ENCODE measurements at regions of chr5 and their contacts with region 1.

Region 1: DNA sequence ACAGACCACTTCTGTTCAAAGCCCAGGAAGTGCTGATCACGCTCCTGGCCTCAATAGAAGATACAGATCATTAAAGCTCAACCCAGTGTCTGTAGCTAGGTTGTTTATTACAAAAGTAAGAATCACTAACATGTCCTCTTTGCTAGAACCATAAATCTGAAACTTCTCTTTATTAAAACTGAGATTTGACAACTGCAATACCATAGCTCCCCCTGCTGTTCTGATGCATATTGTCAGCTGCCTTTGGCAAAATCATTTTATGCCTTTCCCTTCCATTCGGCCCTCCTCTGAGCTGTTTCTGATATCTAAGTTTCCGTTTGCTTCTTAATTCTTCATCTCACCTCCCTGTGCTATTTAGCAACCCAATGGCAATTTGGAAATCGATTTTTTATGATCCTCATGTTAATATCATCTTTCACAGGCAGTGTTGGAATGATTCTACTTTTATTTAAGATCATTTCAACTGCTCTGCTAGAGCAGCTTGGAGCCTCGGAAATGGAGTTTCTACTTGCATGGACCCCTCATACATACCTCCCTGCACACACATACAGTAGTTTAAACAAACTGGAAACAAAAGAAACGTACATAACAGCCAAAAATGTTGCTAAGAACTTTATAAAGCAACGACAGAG is 998.8 kb downstream of the MAT2B start:
- DNase-seq: peak in 1 of 2 experiments; percentile 61
- H3K4me3 ChIP-seq: no peak overlapping the region
- H3K27ac ChIP-seq: no peak overlapping the region
- H3K4me1 ChIP-seq: peaks cover 0 to 2% (median 2%) of the 10 kb centered on the region in 4 experiments; a peak in 4 of 7 replicates
- H3K27me3 ChIP-seq: no peaks in the 10 kb centered on the region
- CTCF ChIP-seq: peak in 2 of 3 experiments; percentile 54 to 77; a peak in 2 of 4 replicates
- EP300 ChIP-seq: no peak
- POLR2A ChIP-seq: no peak
- RAD21 ChIP-seq: peak; percentile 88 to 92

Region 2: DNA sequence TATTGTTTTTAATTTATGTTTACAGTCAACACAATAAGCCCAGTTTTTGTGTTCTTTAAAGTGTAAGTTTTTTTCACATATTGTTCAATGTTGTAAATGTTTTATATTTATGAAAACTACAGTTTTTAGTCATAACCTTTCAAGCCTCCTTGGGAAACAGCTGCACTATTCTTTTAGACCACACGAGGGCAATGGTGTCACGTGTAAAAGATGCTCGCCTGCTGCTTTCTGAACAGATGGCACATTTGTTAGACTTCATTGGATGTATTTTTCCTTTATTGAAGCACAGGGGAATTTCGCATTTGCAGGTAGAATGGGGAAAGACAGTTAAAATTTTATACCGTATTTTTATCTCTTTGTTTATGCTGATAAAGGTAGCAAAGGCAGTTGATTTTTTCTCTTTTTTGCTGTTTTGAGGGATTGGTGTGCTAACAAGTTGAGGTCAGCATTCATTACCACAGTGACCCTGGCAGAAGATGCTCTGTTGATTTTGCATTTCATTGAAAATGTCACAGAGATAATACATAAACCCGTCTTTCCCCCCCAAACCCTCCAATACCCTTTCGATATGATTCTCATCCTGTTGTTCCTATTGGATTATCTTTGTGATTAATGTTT is 939.8 kb before region 1 on chr5:
- CTCF ChIA-PET with region 1: interaction called, 12 read pairs
- POLR2A ChIA-PET with region 1: no interaction called
- DNase-seq: peak in 1 of 2 experiments; percentile 83
- H3K4me3 ChIP-seq: peak overlapping the region in 1 of 4 experiments; percentile 36; a peak in 1 of 8 replicates
- H3K27ac ChIP-seq: no peak overlapping the region
- H3K4me1 ChIP-seq: peaks cover 8 to 25% (median 18%) of the 10 kb centered on the region in 4 experiments; a peak in 6 of 7 replicates
- H3K27me3 ChIP-seq: peaks cover 0 to 20% (median 14%) of the 10 kb centered on the region in 4 experiments; a peak in 4 of 7 replicates
- CTCF ChIP-seq: peak; percentile 10 to 83 (median 62)
- EP300 ChIP-seq: no peak
- POLR2A ChIP-seq: no peak
- RAD21 ChIP-seq: peak; percentile 91

Region 3: GRCh38 chr5:164013077-164013670 is 491.1 kb before region 1 on chr5:
- CTCF ChIA-PET with region 1: interaction called, 30 read pairs
- POLR2A ChIA-PET with region 1: no interaction called
- DNase-seq: peak; percentile 41 to 77
- H3K4me3 ChIP-seq: no peak overlapping the region
- H3K27ac ChIP-seq: no peak overlapping the region
- H3K4me1 ChIP-seq: no peaks in the 10 kb centered on the region
- H3K27me3 ChIP-seq: no peaks in the 10 kb centered on the region
- CTCF ChIP-seq: peak in 2 of 3 experiments; percentile 55 to 64; a peak in 2 of 4 replicates
- EP300 ChIP-seq: no peak
- POLR2A ChIP-seq: no peak
- RAD21 ChIP-seq: peak; percentile 92 to 93

Region 4: GRCh38 chr5:164048359-164048926 is 455.8 kb before region 1 on chr5:
- CTCF ChIA-PET with region 1: interaction called, 12 read pairs
- POLR2A ChIA-PET with region 1: no interaction called
- DNase-seq: no peak
- H3K4me3 ChIP-seq: no peak overlapping the region
- H3K27ac ChIP-seq: no peak overlapping the region
- H3K4me1 ChIP-seq: peaks cover 0 to 3% (median 1%) of the 10 kb centered on the region in 4 experiments; a peak in 1 of 7 replicates
- H3K27me3 ChIP-seq: no peaks in the 10 kb centered on the region
- CTCF ChIP-seq: peak in 1 of 3 experiments; percentile 12; a peak in 1 of 4 replicates
- EP300 ChIP-seq: no peak
- POLR2A ChIP-seq: no peak
- RAD21 ChIP-seq: peak in 1 of 2 experiments; percentile 50; a peak in 3 of 4 replicates

Region 5: GRCh38 chr5:164475339-164475977 is 28.8 kb before region 1 on chr5:
- CTCF ChIA-PET with region 1: interaction called, 15 read pairs
- POLR2A ChIA-PET with region 1: no interaction called
- DNase-seq: no peak
- H3K4me3 ChIP-seq: no peak overlapping the region
- H3K27ac ChIP-seq: no peak overlapping the region
- H3K4me1 ChIP-seq: no peaks in the 10 kb centered on the region; a peak in 1 of 7 replicates
- H3K27me3 ChIP-seq: no peaks in the 10 kb centered on the region
- CTCF ChIP-seq: peak in 2 of 3 experiments; percentile 57 to 59; a peak in 3 of 4 replicates
- EP300 ChIP-seq: no peak
- POLR2A ChIP-seq: no peak
- RAD21 ChIP-seq: peak; percentile 88 to 91

Region 6: DNA sequence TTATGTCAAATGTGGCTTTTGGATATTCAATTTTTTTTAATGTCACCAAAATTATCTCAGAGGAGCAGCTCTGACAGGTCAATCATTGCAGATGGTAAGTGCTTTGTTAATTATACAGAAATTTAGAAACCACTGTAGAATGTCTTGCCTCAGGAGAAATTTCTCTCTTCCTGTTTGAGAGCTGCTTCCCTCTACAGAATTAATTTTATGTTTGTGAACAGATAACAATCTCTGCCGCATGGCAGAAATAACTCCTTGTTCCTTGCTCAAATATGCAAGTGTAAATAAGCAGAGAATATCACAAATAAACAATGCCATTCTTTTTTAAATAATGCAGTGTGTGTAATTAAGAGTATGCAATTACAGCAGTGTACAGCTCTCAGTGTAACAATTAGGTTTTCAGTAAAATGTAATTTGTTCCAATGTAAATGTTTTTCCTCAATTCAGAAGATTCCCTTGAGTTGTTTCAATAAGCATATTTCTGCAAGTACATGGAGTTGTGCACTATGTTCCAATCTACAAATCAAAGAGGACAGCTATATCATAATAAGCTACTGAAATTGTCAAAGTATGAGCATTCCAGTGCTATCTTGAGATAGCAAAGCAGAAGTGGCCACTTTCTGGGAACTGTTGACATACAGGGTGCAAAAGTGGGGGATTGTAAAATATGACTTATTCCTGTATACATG is 13.9 kb after region 1 on chr5:
- CTCF ChIA-PET with region 1: interaction called, 13 read pairs
- POLR2A ChIA-PET with region 1: no interaction called
- DNase-seq: no peak
- H3K4me3 ChIP-seq: no peak overlapping the region
- H3K27ac ChIP-seq: no peak overlapping the region
- H3K4me1 ChIP-seq: peaks cover 0 to 3% (median 0%) of the 10 kb centered on the region in 4 experiments; a peak in 1 of 7 replicates
- H3K27me3 ChIP-seq: peaks cover 0 to 2% (median 0%) of the 10 kb centered on the region in 4 experiments; a peak in 1 of 7 replicates
- CTCF ChIP-seq: no peak
- EP300 ChIP-seq: no peak
- POLR2A ChIP-seq: no peak
- RAD21 ChIP-seq: no peak

Region 7: DNA sequence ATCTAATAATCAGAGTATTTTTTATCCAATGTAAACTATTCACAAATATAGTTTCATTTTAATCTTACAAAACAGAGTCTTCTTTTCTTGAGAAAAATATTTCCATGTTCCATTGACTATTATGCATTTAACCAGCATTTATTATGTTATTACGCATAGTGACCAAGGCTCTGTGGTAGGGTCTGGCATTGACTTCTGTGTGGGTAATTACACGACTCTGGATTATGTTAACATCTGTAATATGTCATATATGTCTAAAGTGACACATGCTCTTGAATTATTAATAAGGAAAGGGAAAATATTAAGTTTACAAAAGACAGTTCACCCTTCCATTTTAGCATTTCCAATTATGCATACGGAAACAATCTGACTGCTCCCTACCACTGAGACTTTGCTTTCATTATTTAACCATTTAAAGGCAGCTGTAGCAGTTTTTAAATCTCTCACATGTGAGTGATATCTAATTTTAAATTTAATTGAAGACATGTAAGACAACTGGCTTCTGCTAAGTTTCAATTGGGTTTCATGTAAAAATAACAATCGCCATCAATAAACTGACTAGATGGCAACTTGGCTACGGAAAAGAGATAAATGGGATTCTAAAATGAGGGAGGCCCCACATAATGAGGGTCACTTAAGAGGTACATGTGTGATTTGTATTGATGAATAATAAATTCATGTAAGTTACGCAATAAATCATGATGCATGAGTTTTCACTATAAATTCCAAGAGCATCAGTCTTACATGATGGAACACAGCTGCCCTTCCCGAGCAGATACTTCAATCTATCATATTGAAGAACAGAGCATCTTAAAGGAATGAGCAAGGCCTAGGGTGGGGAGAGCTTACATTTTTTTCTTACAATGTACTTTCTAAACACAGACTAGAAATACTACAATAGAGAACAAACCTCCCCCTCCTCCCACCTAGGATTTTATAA is 57.9 kb after region 1 on chr5:
- CTCF ChIA-PET with region 1: no interaction called
- POLR2A ChIA-PET with region 1: no interaction called
- DNase-seq: no peak
- H3K4me3 ChIP-seq: no peak overlapping the region
- H3K27ac ChIP-seq: no peak overlapping the region
- H3K4me1 ChIP-seq: no peaks in the 10 kb centered on the region
- H3K27me3 ChIP-seq: no peaks in the 10 kb centered on the region
- CTCF ChIP-seq: no peak
- EP300 ChIP-seq: no peak
- POLR2A ChIP-seq: no peak
- RAD21 ChIP-seq: no peak

Region 8: GRCh38 chr5:164600274-164600673 is 96.0 kb after region 1 on chr5:
- CTCF ChIA-PET with region 1: no interaction called
- POLR2A ChIA-PET with region 1: no interaction called
- DNase-seq: no peak
- H3K4me3 ChIP-seq: no peak overlapping the region
- H3K27ac ChIP-seq: no peak overlapping the region
- H3K4me1 ChIP-seq: no peaks in the 10 kb centered on the region
- H3K27me3 ChIP-seq: no peaks in the 10 kb centered on the region
- CTCF ChIP-seq: no peak
- EP300 ChIP-seq: no peak
- POLR2A ChIP-seq: no peak
- RAD21 ChIP-seq: no peak

Region 9: GRCh38 chr5:164934034-164934433 is 429.8 kb after region 1 on chr5:
- CTCF ChIA-PET with region 1: no interaction called
- POLR2A ChIA-PET with region 1: no interaction called
- DNase-seq: no peak
- H3K4me3 ChIP-seq: no peak overlapping the region
- H3K27ac ChIP-seq: no peak overlapping the region
- H3K4me1 ChIP-seq: 0 out of 7 replicates have a peak, but pooled peaks cover 0 to 2% (median 0%) of the 10 kb centered on the region in 4 experiments
- H3K27me3 ChIP-seq: no peaks in the 10 kb centered on the region
- CTCF ChIP-seq: no peak
- EP300 ChIP-seq: no peak
- POLR2A ChIP-seq: no peak
- RAD21 ChIP-seq: no peak